PC-3 (cell line): ENCODE measurements at regions of chr9 and their contacts with region 1.

Region 1: DNA sequence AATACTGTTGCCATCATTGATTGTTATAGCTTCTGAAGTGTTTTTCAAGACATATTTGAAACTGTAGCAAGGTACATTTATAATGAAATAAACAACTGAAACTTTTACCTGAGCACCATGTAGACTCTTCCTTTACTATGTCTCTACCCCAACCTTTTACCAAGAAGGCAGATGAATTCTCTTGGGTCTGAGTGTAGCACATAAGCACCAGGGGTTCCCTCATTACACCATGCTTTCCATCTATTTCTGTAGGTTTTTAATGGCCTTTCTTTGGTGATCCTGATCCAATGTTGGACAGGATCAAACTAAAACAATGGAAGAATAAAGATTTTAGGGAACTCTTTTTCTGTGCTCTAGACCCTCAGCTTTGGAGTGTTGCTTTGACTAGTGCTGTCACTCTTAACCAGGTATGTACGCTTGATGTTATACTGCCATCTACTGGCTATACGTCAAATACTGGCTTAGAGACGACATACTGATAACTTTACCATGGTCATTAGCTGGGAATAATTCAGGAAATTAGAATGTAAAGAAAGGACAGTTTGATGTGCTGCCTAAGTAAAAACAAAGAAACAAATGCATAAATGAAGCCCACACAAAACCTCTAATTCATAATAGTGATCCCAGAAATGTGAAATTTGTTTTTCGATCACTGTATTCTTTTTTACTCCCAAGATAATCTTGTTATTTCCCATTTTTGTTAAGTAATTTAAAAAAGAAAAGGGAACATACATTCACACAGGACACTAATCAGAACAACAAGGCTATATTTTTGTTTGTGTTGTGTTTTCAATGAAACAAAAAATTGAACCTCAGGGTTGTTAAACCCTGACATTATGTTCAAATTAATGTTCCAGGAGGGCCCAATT is 30.7 kb downstream of the IFNW1 start:
- DNase-seq: peak; percentile 79
- ATAC-seq: peak; percentile 96
- H3K4me3 ChIP-seq: no peak overlapping the region
- H3K27ac ChIP-seq: no peak overlapping the region
- H3K4me1 ChIP-seq: no peaks in the 10 kb centered on the region
- H3K27me3 ChIP-seq: peaks cover 15% of the 10 kb centered on the region
- CTCF ChIP-seq: peak; percentile 78

Region 2: DNA sequence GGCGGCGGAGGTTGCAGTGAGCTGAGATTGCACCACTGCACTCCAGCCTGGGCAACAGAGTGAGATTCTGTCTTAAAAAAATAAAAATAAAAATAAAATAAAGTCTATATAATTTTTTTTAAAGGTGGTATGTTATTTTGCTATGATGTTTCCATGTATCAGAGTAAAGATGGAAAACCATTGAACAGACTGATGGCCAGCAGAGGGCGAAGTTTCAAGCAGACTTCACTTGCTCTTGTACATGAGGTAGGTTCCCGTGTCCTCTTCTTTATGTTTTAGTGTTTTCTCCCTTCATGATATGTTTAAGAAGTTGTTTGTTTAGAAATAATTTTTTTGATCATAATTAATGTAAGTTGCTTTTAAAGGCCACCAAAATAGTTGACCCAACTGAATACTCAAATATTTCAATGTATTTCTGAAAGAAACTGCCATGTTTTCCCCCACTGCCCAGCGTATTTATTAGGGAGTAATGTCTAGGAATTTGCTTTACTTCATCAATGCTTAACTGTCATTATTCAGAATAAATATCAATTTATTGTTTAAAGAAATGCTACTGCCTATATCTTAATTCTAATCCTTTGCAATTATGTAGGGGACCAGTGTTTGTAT is 225.9 kb before region 1 on chr9:
- CTCF ChIA-PET with region 1: interaction called, 3 read pairs
- POLR2A ChIA-PET with region 1: no interaction called
- intact Hi-C with region 1: loop called (anchors 1 kb)
- DNase-seq: peak; percentile 54
- ATAC-seq: peak; percentile 64
- H3K4me3 ChIP-seq: no peak overlapping the region
- H3K27ac ChIP-seq: no peak overlapping the region
- H3K4me1 ChIP-seq: no peaks in the 10 kb centered on the region
- H3K27me3 ChIP-seq: no peaks in the 10 kb centered on the region
- CTCF ChIP-seq: peak; percentile 57

Region 3: DNA sequence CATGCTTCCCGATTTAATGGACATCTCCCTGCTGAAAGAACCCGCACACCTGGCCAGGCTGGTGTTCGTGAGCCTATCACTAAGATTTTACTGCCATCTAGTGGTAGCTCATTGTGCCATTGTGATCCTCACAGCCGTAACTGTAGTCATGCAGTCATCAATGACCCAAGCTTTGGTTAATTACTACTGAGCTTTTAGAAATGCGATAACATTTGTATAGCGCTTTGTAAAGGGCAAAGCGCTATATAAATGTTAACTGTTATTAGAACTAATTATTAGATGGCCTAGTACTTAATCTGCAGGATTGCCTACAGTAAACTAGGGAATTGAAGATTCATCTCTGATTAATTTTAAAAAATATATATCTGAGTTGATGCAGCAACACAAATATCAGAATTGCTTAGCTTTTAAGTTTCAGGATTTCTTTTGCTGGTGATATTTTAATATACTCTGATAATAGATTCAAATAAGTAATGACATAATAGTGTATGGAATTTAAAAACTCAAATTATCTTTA is 169.7 kb before region 1 on chr9:
- CTCF ChIA-PET with region 1: interaction called, 11 read pairs
- POLR2A ChIA-PET with region 1: no interaction called
- intact Hi-C with region 1: loop called (anchors 10 kb)
- DNase-seq: peak; percentile 79
- ATAC-seq: peak; percentile 98
- H3K4me3 ChIP-seq: no peak overlapping the region
- H3K27ac ChIP-seq: no peak overlapping the region
- H3K4me1 ChIP-seq: no peaks in the 10 kb centered on the region
- H3K27me3 ChIP-seq: no peaks in the 10 kb centered on the region
- CTCF ChIP-seq: peak; percentile 82

Region 4: DNA sequence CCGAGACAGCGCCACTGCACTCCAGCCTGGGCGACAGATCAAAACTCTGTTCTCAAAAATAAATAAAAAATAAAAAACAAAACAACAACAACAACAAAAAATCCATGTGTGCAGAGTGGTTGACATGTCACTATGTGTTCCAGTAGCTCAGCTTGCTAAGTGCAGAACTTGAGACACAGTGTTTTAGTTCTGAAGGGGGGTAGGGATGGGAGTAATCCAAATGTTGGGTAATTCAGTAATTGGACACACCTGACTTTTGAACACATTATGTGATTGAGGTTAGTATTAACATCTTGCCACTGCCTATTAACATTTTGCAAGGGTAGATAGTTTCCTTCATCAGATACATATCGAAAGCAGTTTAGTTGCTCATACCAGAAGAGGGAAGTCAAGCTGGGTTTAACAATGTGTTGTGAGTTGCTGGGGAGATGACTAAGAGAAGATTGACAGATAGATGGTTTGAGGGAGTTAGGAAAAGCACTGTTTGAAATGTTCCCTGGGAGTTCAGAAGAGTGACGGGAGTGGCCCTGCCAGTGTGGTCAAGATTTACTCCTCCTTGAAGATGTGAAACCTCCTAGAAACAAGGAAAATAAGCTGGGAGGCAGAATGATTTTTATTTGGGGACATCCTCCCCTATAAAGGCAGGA is 80.4 kb before region 1 on chr9:
- CTCF ChIA-PET with region 1: interaction called, 12 read pairs
- POLR2A ChIA-PET with region 1: no interaction called
- intact Hi-C with region 1: no loop called
- DNase-seq: peak; percentile 13
- ATAC-seq: peak; percentile 43; the same call in 1 of the 2 replicates
- H3K4me3 ChIP-seq: no peak overlapping the region
- H3K27ac ChIP-seq: no peak overlapping the region
- H3K4me1 ChIP-seq: peaks cover 8% of the 10 kb centered on the region
- H3K27me3 ChIP-seq: no peaks in the 10 kb centered on the region
- CTCF ChIP-seq: no peak

Region 5: GRCh38 chr9:21267485-21268346 is 156.8 kb after region 1 on chr9:
- CTCF ChIA-PET with region 1: no interaction called
- POLR2A ChIA-PET with region 1: no interaction called
- intact Hi-C with region 1: no loop called
- DNase-seq: no peak
- ATAC-seq: no peak
- H3K4me3 ChIP-seq: no peak overlapping the region
- H3K27ac ChIP-seq: no peak overlapping the region
- H3K4me1 ChIP-seq: peaks cover 4% of the 10 kb centered on the region; the same call in 1 of the 2 replicates
- H3K27me3 ChIP-seq: no peaks in the 10 kb centered on the region; the same call in 1 of the 2 replicates
- CTCF ChIP-seq: no peak